A673 (cell line): ENCODE measurements at regions of chr3 and their contacts with region 1.

Region 1: GRCh38 chr3:44375450-44375849 is 36.9 kb downstream of the TCAIM start:
- DNase-seq: no peak
- H3K4me3 ChIP-seq: no peak overlapping the region
- H3K27ac ChIP-seq: no peak overlapping the region
- H3K4me1 ChIP-seq: no peaks in the 10 kb centered on the region
- H3K27me3 ChIP-seq: no peaks in the 10 kb centered on the region
- CTCF ChIP-seq: no peak

Region 2: DNA sequence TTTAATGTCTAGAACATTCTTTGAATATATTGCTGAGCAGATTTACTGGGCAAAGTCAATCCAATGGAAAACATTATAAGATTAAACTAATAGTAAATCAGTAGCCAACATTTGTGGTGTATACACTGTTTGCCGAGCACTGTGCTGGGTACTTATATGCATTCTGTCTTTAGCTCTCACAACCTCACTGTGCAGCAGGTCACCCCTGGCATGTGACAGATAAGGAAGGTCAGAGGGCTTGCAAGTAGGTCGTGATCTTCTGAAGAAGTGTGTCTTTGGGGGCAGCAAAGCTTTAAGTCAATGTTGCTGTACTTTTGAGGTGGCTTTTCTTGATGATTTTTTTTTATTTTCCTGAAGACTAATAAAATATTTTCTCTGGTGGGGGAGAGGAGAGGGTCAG is 25.3 kb after region 1 on chr3:
- CTCF ChIA-PET with region 1: no interaction called
- POLR2A ChIA-PET with region 1: no interaction called
- intact Hi-C with region 1: no loop called
- DNase-seq: no peak
- H3K4me3 ChIP-seq: no peak overlapping the region
- H3K27ac ChIP-seq: no peak overlapping the region
- H3K4me1 ChIP-seq: no peaks in the 10 kb centered on the region
- H3K27me3 ChIP-seq: no peaks in the 10 kb centered on the region
- CTCF ChIP-seq: no peak

Region 3: DNA sequence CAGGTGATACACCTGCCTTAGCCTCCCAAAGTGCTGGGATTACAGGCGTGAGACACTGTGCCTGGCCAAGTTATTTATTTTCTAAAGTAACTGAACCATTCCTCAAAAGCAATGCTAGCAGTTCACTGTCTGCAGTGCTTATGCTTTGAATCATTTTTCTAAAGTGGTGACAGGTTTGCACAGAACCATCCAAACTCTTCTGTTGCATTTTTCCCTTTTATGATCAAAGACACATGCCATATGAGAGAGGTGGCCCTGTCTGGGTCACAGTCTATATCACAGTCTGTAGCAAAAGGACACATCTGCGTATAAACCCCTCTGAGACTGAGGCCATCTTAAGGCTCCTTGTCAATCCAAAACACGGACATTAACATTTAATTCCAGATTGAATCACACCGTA is 753.5 kb after region 1 on chr3:
- CTCF ChIA-PET with region 1: no interaction called
- POLR2A ChIA-PET with region 1: interaction called, 15 read pairs
- intact Hi-C with region 1: no loop called
- DNase-seq: no peak
- H3K4me3 ChIP-seq: no peak overlapping the region
- H3K27ac ChIP-seq: no peak overlapping the region
- H3K4me1 ChIP-seq: no peaks in the 10 kb centered on the region
- H3K27me3 ChIP-seq: no peaks in the 10 kb centered on the region
- CTCF ChIP-seq: no peak